ENCODE measurements at regions of chr11 and their contacts with region 1.

Region 1: DNA sequence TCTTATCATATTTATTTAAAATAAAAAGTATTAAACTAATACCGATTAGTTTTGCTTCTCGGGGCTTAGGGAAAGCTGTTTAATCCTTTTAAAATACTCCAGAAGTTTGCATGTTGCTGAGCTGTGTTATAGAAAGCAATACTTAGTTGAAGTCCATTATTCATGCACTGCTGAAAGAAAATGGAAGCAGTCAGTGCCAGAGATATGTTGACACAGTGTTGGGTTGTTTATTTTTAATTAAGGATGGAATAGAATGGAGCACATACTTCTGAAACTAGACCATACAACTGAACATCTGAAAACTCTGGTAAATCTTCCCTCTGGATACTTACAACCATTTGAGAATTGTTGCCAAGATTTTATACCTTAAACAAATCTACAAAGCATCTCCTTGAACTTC is 282.7 kb upstream of the CCDC179 start:
- DNase-seq: no peak
- H3K4me3 ChIP-seq: no peak overlapping the region
- H3K27ac ChIP-seq: no peak overlapping the region
- H3K4me1 ChIP-seq: no peaks in the 10 kb centered on the region
- H3K27me3 ChIP-seq: no peaks in the 10 kb centered on the region
- CTCF ChIP-seq: no peak

Region 2: GRCh38 chr11:22829231-22830081 is 313.6 kb before region 1 on chr11 and contains the start of gene SVIP:
- CTCF ChIA-PET with region 1: interaction called, 16 read pairs
- POLR2A ChIA-PET with region 1: no interaction called
- intact Hi-C with region 1: no loop called
- DNase-seq: peak; percentile 79 to 96
- H3K4me3 ChIP-seq: peak within 1 kb of the TSS; percentile 83
- H3K27ac ChIP-seq: peak within 1 kb of the TSS; percentile 47; the same call in 1 of the 2 replicates
- H3K4me1 ChIP-seq: peaks cover 17% of the 10 kb centered on the region
- H3K27me3 ChIP-seq: no peaks in the 10 kb centered on the region
- CTCF ChIP-seq: peak; percentile 64
- total RNA-seq, gene SVIP: 21.8 and 34.2 TPM in 2 replicates

Region 3: DNA sequence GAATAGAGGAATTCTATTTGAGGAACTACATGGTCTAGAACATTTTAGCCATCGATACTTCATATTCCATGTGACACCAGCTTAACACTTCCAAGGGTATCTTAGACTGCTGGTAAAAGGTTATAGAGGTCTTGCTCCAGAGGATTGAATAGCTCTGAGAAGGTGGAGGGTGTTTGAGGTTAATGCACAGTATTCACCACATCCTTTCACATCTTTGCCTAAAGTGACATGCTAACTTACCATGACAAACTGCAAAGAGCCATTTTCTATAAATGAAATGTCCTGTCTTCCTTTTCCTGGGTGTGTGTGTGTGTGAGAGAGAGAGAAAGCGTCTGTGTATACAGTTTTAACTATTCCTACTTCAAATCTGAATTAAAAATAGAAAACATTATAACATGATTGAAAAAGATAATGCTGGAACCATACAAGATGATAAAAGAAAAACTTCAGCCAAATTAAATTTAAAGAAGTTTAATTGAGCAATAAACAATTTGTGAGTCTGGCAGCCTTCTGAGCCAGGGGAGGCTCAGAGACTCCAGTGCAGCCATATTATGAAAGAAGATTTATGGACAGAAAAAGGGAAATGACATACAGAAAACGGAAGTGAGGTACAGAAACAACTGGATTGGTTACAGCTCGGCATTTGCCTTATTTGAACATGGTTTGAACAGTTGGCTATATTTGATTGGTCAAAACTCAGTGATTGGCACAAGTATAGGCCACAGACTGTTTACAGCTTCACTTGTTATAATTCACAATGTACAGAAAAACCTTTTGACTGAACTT is 38.2 kb after region 1 on chr11:
- CTCF ChIA-PET with region 1: no interaction called
- POLR2A ChIA-PET with region 1: no interaction called
- intact Hi-C with region 1: no loop called
- DNase-seq: no peak
- H3K4me3 ChIP-seq: no peak overlapping the region
- H3K27ac ChIP-seq: no peak overlapping the region
- H3K4me1 ChIP-seq: no peaks in the 10 kb centered on the region
- H3K27me3 ChIP-seq: no peaks in the 10 kb centered on the region
- CTCF ChIP-seq: no peak